ENCODE measurements at regions of chr9 and their contacts with region 1.

Region 1: DNA sequence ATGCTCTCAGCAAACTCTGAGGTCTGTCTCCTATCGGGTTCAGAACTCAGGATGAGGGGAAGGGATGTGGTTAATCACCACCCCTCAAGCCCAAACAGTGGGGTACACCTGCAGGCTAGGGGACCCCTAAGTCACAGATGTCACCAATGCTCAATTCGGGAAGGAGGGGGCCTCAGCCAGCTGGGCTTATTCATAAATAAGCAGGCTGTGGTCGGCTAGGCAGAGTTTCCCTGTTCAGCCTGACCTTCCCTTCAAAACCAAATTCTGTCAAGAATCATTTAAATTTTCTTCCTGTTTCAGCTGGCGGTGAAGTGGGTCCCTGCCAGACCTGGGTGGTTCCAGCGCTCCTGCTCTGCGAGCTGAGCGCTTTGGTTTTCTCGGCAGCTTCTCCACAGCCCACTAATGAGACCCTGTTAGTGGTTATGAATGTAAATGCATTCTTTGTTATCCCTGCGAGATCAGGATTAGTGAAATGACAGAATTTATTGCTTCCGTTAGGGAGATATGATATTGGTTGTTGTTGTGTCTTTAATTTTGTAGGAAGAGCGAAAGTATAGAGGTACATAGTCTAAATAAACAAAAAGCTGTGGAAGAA is 68.3 kb downstream of the AK8 start:
- DNase-seq: no peak
- H3K4me3 ChIP-seq: no peak overlapping the region
- H3K27ac ChIP-seq: no peak overlapping the region
- H3K4me1 ChIP-seq: no peaks in the 10 kb centered on the region
- H3K27me3 ChIP-seq: peaks cover 1% of the 10 kb centered on the region
- CTCF ChIP-seq: no peak

Region 2: GRCh38 chr9:132768932-132769905 is 40.6 kb before region 1 on chr9:
- CTCF ChIA-PET with region 1: no interaction called
- dilution Hi-C with region 1: loop called (anchors 5 kb)
- in situ Hi-C with region 1: no loop called
- intact Hi-C with region 1: no loop called
- DNase-seq: peak; percentile 32
- H3K4me3 ChIP-seq: peak overlapping the region; percentile 61 to 80 (median 75)
- H3K27ac ChIP-seq: peak overlapping the region; percentile 34
- H3K4me1 ChIP-seq: no peaks in the 10 kb centered on the region
- H3K27me3 ChIP-seq: no peaks in the 10 kb centered on the region
- CTCF ChIP-seq: peak; percentile 30 to 37

Region 3: GRCh38 chr9:132862533-132862932 is 52.8 kb after region 1 on chr9:
- CTCF ChIA-PET with region 1: no interaction called
- dilution Hi-C with region 1: loop called (anchors 10 kb)
- in situ Hi-C with region 1: no loop called
- intact Hi-C with region 1: no loop called
- DNase-seq: peak; percentile 12
- H3K4me3 ChIP-seq: no peak overlapping the region
- H3K27ac ChIP-seq: no peak overlapping the region
- H3K4me1 ChIP-seq: peaks cover 9% of the 10 kb centered on the region
- H3K27me3 ChIP-seq: no peaks in the 10 kb centered on the region
- CTCF ChIP-seq: no peak

Region 4: GRCh38 chr9:132877824-132878694 is 68.3 kb after region 1 on chr9 and contains the start of gene AK8:
- CTCF ChIA-PET with region 1: no interaction called
- dilution Hi-C with region 1: no loop called
- in situ Hi-C with region 1: no loop called
- intact Hi-C with region 1: no loop called
- DNase-seq: peak; percentile 65
- H3K4me3 ChIP-seq: peak within 1 kb of the TSS; percentile 91 to 99 (median 96)
- H3K27ac ChIP-seq: peak within 1 kb of the TSS; percentile 91
- H3K4me1 ChIP-seq: peaks cover 3% of the 10 kb centered on the region
- H3K27me3 ChIP-seq: no peaks in the 10 kb centered on the region
- CTCF ChIP-seq: no peak
- total RNA-seq, gene AK8: 1.1 to 1.2 TPM

Region 5: GRCh38 chr9:132946624-132947295 is 137.0 kb after region 1 on chr9:
- CTCF ChIA-PET with region 1: interaction called, 14 read pairs
- dilution Hi-C with region 1: no loop called
- in situ Hi-C with region 1: no loop called
- intact Hi-C with region 1: no loop called
- DNase-seq: no peak
- H3K4me3 ChIP-seq: no peak overlapping the region
- H3K27ac ChIP-seq: no peak overlapping the region
- H3K4me1 ChIP-seq: peaks cover 22% of the 10 kb centered on the region
- H3K27me3 ChIP-seq: no peaks in the 10 kb centered on the region
- CTCF ChIP-seq: no peak

Measured in mammary epithelial cell (primary cell).